Activated T-helper 2 cell treated with anti-CD3 and anti-CD28 coated beads, Interferon-gamma antibody, Interleukin-2, Interleukin-4, amounts not matched to agents 10 μg/mL and 5 μg/mL and 100 μg/mL, durations not matched to agents 14 hours and 24 hours and 36 hours (primary cell): ENCODE measurements at regions of chr17 and their contacts with region 1.

Region 1: GRCh38 chr17:78360371-78361224 is 721 bp upstream of the SOCS3 start:
- DNase-seq: peak; percentile 82
- H3K4me3 Mint-ChIP-seq: peak overlapping the region; percentile 83
- H3K27ac Mint-ChIP-seq: peak overlapping the region; percentile 90
- H3K4me1 Mint-ChIP-seq: peaks cover 33% of the 10 kb centered on the region
- H3K27me3 Mint-ChIP-seq: peaks cover 11% of the 10 kb centered on the region

Region 2: GRCh38 chr17:78133971-78134898 is 226.4 kb before region 1 on chr17:
- intact Hi-C with region 1: loop called (anchors 5 kb)
- DNase-seq: peak; percentile 80
- H3K4me3 Mint-ChIP-seq: peak overlapping the region; percentile 75
- H3K27ac Mint-ChIP-seq: peak overlapping the region; percentile 54
- H3K4me1 Mint-ChIP-seq: peaks cover 57% of the 10 kb centered on the region
- H3K27me3 Mint-ChIP-seq: no peaks in the 10 kb centered on the region

Region 3: GRCh38 chr17:78289802-78290363 is 70.7 kb before region 1 on chr17:
- intact Hi-C with region 1: loop called (anchors 2 kb)
- DNase-seq: peak; percentile 62
- H3K4me3 Mint-ChIP-seq: no peak overlapping the region
- H3K27ac Mint-ChIP-seq: no peak overlapping the region
- H3K4me1 Mint-ChIP-seq: peaks cover 2% of the 10 kb centered on the region
- H3K27me3 Mint-ChIP-seq: no peaks in the 10 kb centered on the region

Region 4: DNA sequence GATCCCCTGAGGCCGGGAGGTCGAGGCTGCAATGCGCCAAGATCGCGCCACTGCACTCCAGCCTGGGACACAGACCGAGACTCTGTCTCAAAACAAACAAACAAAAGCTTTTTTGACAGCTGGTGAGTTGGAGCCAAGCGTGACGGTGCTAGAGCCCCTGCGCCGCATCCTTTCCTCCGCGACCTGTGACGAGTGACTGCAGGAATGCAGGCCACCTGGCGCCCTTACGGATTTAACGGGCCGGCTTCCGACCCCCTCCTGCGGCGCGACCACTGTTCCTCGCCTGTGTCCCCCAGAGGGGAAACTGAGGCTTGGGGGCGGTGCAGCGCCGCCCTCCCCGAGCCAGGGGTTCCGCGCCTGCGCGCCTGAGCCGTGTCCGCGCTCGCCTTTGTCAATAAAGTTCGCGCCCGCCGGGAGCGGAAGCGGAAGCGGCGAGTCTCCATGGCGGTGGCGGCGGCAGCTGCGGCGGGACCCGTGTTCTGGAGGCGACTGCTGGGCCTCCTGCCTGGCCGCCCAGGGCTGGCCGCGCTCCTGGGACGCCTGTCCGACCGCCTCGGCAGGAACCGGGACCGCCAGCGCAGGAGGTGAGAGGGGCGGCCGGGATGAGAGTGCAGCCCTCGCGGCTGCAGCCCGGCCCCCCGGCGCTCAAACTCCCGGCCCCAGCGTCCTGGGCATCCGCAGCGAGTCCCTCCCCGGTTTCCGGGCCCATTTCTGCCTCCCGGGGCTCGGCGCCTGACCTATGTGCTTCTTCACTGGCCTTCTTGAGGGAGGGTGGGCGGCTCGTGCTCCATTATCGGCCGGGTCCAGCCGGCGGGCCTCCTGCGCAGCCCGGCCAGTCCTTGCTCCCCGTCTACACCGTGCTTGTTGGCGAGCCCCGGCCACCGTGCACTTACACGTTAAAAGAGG is 17.9 kb after region 1 on chr17 and contains the start of gene PGS1:
- intact Hi-C with region 1: loop called (anchors 1 kb)
- DNase-seq: peak; percentile 82
- H3K4me3 Mint-ChIP-seq: peak within 1 kb of the TSS; percentile 99
- H3K27ac Mint-ChIP-seq: peak within 1 kb of the TSS; percentile 94
- H3K4me1 Mint-ChIP-seq: peaks cover 37% of the 10 kb centered on the region
- H3K27me3 Mint-ChIP-seq: no peaks in the 10 kb centered on the region
- total RNA-seq, gene PGS1: 59.3 and 64.1 TPM in 2 replicates

Region 5: DNA sequence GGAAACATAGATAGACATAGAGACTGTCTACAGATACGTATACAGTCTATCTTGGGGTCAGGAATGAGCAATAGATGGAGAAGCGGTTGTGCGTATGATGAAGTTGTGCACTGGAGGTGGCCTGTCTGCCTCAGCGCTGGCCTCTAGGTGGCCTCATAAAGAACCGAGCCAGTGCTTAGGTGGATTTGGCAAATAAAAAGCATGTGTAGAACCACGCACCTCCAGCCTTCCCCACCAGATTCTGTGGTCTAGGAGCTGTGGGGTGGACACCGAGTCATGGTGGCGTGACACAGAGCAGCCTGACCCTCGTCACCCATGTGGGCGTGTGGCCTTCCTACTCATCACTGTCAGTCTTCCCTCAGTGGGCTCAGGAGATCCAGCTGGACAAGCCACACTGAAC is 51.8 kb after region 1 on chr17:
- intact Hi-C with region 1: no loop called
- DNase-seq: peak; percentile 24
- H3K4me3 Mint-ChIP-seq: peak overlapping the region; percentile 22
- H3K27ac Mint-ChIP-seq: peak overlapping the region; percentile 96
- H3K4me1 Mint-ChIP-seq: peaks cover 62% of the 10 kb centered on the region
- H3K27me3 Mint-ChIP-seq: no peaks in the 10 kb centered on the region

Region 6: DNA sequence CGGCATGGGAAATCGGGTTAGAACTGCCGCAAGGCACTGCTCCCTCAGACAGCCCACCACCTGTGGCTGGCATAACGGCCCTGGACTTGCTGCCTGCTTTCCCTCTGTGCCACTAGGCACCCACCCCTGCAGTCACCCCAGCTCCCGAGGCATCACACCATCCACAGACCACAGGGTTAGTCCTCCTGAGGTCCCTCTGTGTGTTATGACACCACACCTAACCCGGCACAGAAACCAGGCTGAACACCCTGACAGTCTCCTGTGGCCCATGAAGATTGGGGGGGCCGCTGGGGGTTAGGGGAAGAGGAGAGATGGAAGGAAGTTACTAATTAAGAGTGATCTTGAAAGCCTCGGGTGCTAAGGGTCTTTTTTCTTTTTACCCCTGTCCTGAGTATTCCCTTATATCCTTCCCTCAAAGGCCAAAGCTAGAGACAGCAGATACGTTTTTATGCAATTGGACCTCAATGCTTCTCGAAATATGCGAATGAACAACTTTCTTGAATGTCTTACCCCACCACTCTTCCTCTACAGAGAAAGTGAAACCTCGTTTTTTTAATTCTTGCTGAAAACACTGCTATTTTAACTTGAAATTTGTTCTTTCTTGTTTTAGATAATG is 414.5 kb after region 1 on chr17:
- intact Hi-C with region 1: loop called (anchors 5 kb)
- DNase-seq: peak; percentile 67
- H3K4me3 Mint-ChIP-seq: peak overlapping the region; percentile 85
- H3K27ac Mint-ChIP-seq: peak overlapping the region; percentile 98
- H3K4me1 Mint-ChIP-seq: peaks cover 58% of the 10 kb centered on the region
- H3K27me3 Mint-ChIP-seq: no peaks in the 10 kb centered on the region